Ascending aorta (tissue), 2 donors: ENCODE measurements at regions of chr9 and their contacts with region 1.

Region 1: DNA sequence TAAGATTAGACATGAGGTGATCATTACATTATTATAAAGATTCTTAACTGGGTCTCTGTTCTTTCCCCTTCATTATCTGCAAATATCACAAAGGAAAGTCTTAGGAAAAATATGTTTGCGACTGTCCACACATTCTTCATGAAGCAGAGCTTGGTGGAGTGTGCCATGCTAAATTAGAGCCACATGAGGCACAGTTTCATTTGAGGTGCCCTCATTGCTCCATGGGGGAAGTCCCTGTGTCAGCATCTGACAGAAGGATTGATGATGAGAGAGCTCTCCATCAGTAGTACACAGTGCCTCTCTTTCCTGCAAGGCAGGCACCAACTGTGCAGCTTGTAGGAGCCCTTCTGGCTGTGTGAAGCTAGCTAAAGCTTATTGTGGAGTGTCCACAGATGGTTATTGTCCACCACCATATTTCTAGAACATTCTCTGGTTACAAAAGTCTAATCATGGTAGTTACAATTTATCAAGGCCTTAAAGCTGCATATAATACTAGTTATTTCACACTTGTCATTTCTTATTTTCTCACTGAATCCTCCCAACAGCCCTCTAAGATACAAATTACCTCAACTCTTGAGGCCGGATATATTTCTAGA is 63.9 kb downstream of the C9orf152 start:
- DNase-seq: no peak
- H3K4me3 ChIP-seq: no peak overlapping the region
- H3K27ac ChIP-seq: peak overlapping the region in 1 of 2 donors; percentile 25
- H3K4me1 ChIP-seq: peaks cover 10 to 60% of the 10 kb centered on the region in 2 donors
- H3K27me3 ChIP-seq: no peaks in the 10 kb centered on the region
- CTCF ChIP-seq: no peak

Region 2: GRCh38 chr9:110050925-110051355 is 93.1 kb before region 1 on chr9:
- intact Hi-C with region 1: loop called (anchors 5 kb)
- DNase-seq: peak in 1 of 2 donors; percentile 72
- H3K4me3 ChIP-seq: peak overlapping the region in 1 of 2 donors; percentile 74
- H3K27ac ChIP-seq: peak overlapping the region; percentile 55 to 70
- H3K4me1 ChIP-seq: peaks cover 0 to 15% of the 10 kb centered on the region in 2 donors
- H3K27me3 ChIP-seq: no peaks in the 10 kb centered on the region
- CTCF ChIP-seq: no peak

Region 3: GRCh38 chr9:110099236-110100095 is 44.6 kb before region 1 on chr9:
- intact Hi-C with region 1: no loop called
- DNase-seq: peak in 1 of 2 donors; percentile 73
- H3K4me3 ChIP-seq: no peak overlapping the region
- H3K27ac ChIP-seq: peak overlapping the region; percentile 23 to 36
- H3K4me1 ChIP-seq: peaks cover 5 to 38% of the 10 kb centered on the region in 2 donors
- H3K27me3 ChIP-seq: no peaks in the 10 kb centered on the region
- CTCF ChIP-seq: no peak

Region 4: DNA sequence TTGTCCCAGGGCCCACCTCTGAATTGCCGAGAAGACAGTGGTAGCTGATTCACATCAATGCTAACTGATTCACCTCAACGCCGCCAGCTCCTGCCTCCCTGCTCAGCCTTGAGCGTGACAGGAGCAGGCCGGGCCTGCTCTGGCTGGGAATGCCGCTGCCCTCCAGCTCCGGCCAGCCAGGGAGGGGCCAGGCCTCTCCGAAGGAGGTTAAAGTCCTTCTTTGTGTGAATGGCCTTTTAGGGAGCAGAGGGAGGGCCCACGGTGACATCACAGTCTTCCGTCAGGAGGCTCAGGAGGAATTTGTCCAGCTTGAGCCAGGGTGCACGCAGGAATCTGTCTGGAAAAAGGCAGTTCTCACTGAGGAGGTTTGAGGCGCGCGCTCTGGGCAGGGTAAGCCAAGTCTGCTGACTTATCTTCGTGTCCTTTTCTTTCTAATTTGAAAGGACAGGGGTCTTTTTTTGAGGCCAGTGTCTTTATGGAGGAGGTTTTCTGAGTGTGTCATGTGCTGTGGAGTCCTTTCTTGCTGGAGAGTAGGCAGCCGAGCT is 18.8 kb before region 1 on chr9:
- intact Hi-C with region 1: loop called (anchors 1 kb)
- DNase-seq: peak; percentile 76 to 97
- H3K4me3 ChIP-seq: peak overlapping the region in 1 of 2 donors; percentile 63
- H3K27ac ChIP-seq: peak overlapping the region; percentile 91 to 92
- H3K4me1 ChIP-seq: peaks cover 23 to 59% of the 10 kb centered on the region in 2 donors
- H3K27me3 ChIP-seq: no peaks in the 10 kb centered on the region
- CTCF ChIP-seq: no peak